Sigmoid colon (tissue), 7 donors: ENCODE measurements at regions of chr2 and their contacts with region 1.

Region 1: GRCh38 chr2:10043906-10044601 is 704 bp downstream of the KLF11 start:
- DNase-seq: peak; percentile 99
- H3K4me3 ChIP-seq: peak overlapping the region; percentile 61 to 86 (median 78)
- H3K27ac ChIP-seq: peak overlapping the region; percentile 97 to 100 (median 98)
- H3K4me1 ChIP-seq: peaks cover 0 to 86% (median 79%) of the 10 kb centered on the region in 4 donors
- H3K27me3 ChIP-seq: no peaks in the 10 kb centered on the region
- CTCF ChIP-seq: no peak
- EP300 ChIP-seq: peak in 2 of 4 donors; percentile 54 to 85
- POLR2A ChIP-seq: no peak

Region 2: GRCh38 chr2:9555297-9556141 is 488.5 kb before region 1 on chr2 and contains the start of gene ADAM17:
- intact Hi-C with region 1: loop called (anchors 5 kb)
- DNase-seq: peak; percentile 98
- H3K4me3 ChIP-seq: peak within 1 kb of the TSS; percentile 63 to 96 (median 79)
- H3K27ac ChIP-seq: peak within 1 kb of the TSS; percentile 92 to 99 (median 98)
- H3K4me1 ChIP-seq: peaks cover 0 to 67% (median 48%) of the 10 kb centered on the region in 4 donors
- H3K27me3 ChIP-seq: no peaks in the 10 kb centered on the region
- CTCF ChIP-seq: peak; percentile 67 to 83 (median 70)
- EP300 ChIP-seq: peak in 2 of 4 donors; percentile 51 to 61
- POLR2A ChIP-seq: peak; percentile 88
- total RNA-seq, gene ADAM17: 12.1 to 17.6 (median 16.1) TPM

Region 3: GRCh38 chr2:9630749-9631483 is 413.1 kb before region 1 on chr2 and contains the start of gene YWHAQ:
- intact Hi-C with region 1: loop called (anchors 10 kb)
- DNase-seq: peak; percentile 100
- H3K4me3 ChIP-seq: peak within 1 kb of the TSS; percentile 71 to 88 (median 82)
- H3K27ac ChIP-seq: peak within 1 kb of the TSS; percentile 95 to 98 (median 98)
- H3K4me1 ChIP-seq: peaks cover 0 to 43% (median 40%) of the 10 kb centered on the region in 4 donors
- H3K27me3 ChIP-seq: no peaks in the 10 kb centered on the region
- CTCF ChIP-seq: no peak
- EP300 ChIP-seq: peak in 2 of 4 donors; percentile 43 to 62
- POLR2A ChIP-seq: peak; percentile 85 to 91
- total RNA-seq, gene YWHAQ: 179 to 273 (median 229) TPM

Region 4: GRCh38 chr2:9813312-9814133 is 230.5 kb before region 1 on chr2:
- intact Hi-C with region 1: loop called (anchors 2 kb)
- DNase-seq: peak; percentile 87
- H3K4me3 ChIP-seq: peak overlapping the region in 2 of 4 donors; percentile 20 to 30
- H3K27ac ChIP-seq: no peak overlapping the region
- H3K4me1 ChIP-seq: peaks cover 0 to 10% (median 9%) of the 10 kb centered on the region in 4 donors
- H3K27me3 ChIP-seq: no peaks in the 10 kb centered on the region
- CTCF ChIP-seq: peak; percentile 72 to 90 (median 82)
- EP300 ChIP-seq: no peak
- POLR2A ChIP-seq: no peak

Region 5: GRCh38 chr2:9843229-9844035 is 200.6 kb before region 1 on chr2 and contains the start of gene TAF1B:
- intact Hi-C with region 1: loop called (anchors 5 kb)
- DNase-seq: peak; percentile 88
- H3K4me3 ChIP-seq: peak within 1 kb of the TSS; percentile 68 to 77 (median 73)
- H3K27ac ChIP-seq: peak within 1 kb of the TSS; percentile 80 to 90 (median 88)
- H3K4me1 ChIP-seq: peaks cover 0 to 19% (median 12%) of the 10 kb centered on the region in 4 donors
- H3K27me3 ChIP-seq: no peaks in the 10 kb centered on the region
- CTCF ChIP-seq: peak in 2 of 4 experiments; percentile 17 to 26
- EP300 ChIP-seq: peak in 1 of 4 donors; percentile 34
- POLR2A ChIP-seq: peak; percentile 39 to 51
- total RNA-seq, gene TAF1B: 10.3 to 14.5 (median 12.2) TPM

Region 6: DNA sequence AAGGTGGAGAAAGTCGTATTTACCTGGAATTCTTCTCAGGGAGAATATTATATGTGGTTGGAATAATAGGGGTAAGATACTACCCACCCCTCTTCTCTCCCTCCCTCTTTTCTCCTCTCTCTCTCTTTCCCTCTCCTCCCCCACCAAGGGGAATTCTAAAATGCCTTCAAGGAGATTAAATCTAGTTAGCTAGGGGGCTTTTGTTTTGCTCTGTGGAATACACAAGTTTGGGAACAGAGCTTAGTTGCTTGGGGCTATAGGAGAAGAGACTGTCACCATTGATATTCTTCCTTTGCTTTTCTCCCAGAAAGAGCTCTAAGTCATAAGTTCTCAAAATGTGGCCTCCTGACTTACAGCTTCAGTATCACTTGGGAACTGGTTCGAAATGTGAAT is 166.3 kb before region 1 on chr2:
- intact Hi-C with region 1: no loop called
- DNase-seq: no peak
- H3K4me3 ChIP-seq: no peak overlapping the region
- H3K27ac ChIP-seq: no peak overlapping the region
- H3K4me1 ChIP-seq: no peaks in the 10 kb centered on the region
- H3K27me3 ChIP-seq: no peaks in the 10 kb centered on the region
- CTCF ChIP-seq: no peak
- EP300 ChIP-seq: no peak
- POLR2A ChIP-seq: no peak

Region 7: DNA sequence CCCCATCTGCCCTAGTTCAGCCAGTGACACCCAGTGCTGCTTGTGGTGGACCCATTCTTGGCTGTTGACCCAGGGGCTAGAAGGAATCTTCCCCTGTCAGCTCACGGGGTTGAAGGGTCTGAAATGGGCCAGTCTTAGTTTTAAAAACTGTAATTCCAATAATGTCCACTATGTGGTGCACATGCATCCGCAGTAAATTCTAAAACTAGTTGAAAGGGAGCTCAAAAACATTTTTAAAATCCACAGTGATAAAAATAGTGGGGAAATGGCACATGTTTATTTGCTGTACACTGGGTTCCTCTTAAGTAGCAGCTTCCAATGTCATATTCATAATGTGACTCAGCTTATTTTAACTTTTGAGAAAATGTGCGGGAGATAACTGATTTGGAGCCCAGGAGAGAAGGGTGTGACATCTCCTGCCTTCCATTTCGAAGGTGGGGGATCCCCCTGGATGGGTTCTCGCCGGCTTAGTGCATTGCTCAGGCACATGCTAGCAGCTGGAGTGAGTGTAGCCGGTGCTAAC is 59.8 kb before region 1 on chr2:
- intact Hi-C with region 1: loop called (anchors 2 kb)
- DNase-seq: no peak
- H3K4me3 ChIP-seq: no peak overlapping the region
- H3K27ac ChIP-seq: peak overlapping the region; percentile 31 to 81 (median 72)
- H3K4me1 ChIP-seq: peaks cover 0 to 31% (median 26%) of the 10 kb centered on the region in 4 donors
- H3K27me3 ChIP-seq: no peaks in the 10 kb centered on the region
- CTCF ChIP-seq: peak; percentile 69 to 85 (median 74)
- EP300 ChIP-seq: no peak
- POLR2A ChIP-seq: no peak

Region 8: DNA sequence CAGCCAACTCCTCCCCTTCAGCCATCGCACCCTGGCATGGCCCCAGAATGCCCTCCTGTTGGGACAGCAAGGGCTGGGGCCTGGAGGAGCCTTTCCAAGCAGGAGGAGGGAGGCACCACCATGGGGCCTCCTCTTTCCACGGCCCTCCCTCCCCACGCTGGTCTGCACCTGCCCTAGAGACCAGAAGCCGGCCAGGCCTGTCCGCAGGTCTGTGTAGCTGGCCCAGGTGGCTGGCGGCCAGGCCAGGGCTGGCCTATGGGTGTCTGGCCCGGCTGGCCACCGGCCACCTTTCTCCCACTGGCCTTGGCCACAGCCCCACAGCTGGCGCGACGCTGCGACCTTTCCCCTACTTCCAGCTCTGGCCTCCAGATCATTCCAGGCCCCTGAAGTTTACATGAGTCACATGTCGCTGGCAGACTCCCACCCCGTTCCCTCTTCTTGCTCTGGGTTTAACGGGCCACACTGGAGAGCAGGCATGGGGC is 34.2 kb before region 1 on chr2:
- intact Hi-C with region 1: loop called (anchors 2 kb)
- DNase-seq: peak; percentile 95
- H3K4me3 ChIP-seq: no peak overlapping the region
- H3K27ac ChIP-seq: peak overlapping the region; percentile 3 to 80 (median 64)
- H3K4me1 ChIP-seq: peaks cover 0 to 48% (median 44%) of the 10 kb centered on the region in 4 donors
- H3K27me3 ChIP-seq: no peaks in the 10 kb centered on the region
- CTCF ChIP-seq: no peak
- EP300 ChIP-seq: peak in 1 of 4 donors; percentile 48
- POLR2A ChIP-seq: no peak